GM10248 (cell line): ENCODE measurements at regions of chr12 and their contacts with region 1.

Region 1: DNA sequence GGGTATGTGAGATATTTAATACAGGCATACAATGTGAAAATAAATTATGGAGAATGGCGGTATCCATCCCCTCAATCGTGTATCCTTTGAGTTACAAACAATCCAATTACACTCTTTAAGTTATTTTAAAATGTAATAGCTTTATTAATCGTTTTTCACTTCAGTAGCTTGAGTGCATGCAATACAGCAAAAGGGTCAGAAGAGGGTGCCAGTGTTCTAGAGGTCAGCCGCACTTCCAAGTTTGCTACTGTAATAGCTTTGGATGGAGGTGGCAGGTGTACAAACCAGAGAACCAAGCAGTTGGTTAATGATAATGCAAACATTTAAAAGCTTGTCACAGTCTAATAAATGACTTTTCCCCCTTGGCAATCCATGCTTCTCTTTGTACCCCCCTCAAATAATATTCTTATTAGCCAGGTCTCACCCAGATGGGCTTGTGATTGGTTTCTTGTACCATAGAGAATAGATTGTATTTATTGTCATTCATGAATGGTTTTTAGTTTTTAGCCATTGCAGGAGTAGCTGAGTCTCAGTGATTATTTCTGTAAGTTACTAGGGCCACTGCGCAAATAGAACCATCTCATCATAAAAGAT is 127.0 kb downstream of the ERC1 start:
- DNase-seq: peak; percentile 31
- CTCF ChIP-seq: peak; percentile 84

Region 2: DNA sequence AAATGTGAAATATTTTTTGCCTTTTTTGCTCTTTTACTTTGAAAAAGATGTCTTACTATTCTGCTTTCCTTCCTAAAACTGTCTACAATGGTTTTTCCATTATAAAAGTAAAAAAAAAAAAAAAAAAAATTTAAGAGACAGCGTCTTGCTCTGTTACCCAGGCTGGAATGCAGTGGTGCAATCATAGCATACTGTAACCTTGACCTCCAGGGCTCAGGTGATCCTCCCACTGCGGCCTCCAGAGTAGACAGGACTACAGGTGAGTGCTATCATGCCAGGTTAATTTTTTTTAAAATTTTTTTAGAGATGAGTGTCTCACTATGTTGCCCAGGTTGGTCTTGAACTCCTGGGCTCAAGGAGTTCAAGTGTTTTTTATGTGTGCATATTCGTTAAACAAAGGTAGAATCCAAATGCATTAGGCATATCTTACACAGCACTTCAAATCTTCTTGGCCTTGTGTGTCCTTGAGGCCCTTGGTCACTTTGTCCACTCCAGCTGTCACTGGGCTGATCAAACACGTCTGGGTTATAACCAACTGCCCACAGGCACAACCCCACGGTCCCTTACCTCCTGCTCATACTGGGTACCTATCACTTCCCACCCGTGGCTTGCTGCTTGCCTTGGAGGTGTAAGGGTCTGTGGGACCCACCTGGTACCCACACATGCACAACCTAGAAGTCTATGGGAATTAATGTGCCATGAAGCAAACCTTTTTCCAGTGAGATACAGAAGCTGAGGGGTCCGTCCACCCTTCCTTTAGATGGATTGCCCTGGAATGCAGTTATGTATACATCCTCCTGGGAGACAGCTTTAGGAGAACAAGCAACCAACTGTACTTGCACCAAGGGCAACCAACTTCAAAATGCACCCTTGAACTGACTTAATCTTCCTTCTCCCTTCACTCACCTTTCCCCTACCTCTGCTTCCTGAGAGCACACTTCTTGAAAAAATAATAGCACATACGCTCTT is 181.4 kb before region 1 on chr12:
- CTCF ChIA-PET with region 1: no interaction called
- POLR2A ChIA-PET with region 1: no interaction called
- DNase-seq: no peak
- CTCF ChIP-seq: no peak

Region 3: DNA sequence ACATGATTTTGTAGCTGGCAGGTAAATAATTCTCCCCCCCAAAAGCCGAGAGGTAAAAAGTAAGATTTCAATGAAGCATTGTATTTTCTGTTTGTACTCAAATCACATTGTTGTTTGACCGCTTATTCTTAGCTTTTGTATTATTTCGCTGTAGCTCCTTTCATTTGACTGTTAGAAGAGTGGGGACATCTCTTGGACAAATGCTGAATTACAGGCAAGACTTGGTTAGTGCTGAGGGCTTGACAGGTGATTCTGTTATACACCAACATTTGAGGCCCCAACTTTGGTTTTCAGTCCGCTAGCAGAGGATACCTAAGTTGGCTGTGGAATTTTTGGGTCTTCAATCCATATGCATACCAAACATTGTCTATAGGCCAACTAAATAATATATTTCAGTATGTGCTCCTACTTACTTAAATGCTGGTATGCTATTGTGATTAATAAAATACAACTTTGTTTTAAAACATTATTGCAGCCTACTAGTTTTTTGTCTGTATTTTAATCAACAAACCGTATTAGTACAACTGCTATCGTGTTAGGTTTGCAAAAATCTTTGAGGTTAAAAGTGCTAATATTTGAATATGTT is 24.8 kb before region 1 on chr12:
- CTCF ChIA-PET with region 1: interaction called, 24 read pairs
- POLR2A ChIA-PET with region 1: no interaction called
- DNase-seq: peak; percentile 47
- CTCF ChIP-seq: peak; percentile 77

Region 4: DNA sequence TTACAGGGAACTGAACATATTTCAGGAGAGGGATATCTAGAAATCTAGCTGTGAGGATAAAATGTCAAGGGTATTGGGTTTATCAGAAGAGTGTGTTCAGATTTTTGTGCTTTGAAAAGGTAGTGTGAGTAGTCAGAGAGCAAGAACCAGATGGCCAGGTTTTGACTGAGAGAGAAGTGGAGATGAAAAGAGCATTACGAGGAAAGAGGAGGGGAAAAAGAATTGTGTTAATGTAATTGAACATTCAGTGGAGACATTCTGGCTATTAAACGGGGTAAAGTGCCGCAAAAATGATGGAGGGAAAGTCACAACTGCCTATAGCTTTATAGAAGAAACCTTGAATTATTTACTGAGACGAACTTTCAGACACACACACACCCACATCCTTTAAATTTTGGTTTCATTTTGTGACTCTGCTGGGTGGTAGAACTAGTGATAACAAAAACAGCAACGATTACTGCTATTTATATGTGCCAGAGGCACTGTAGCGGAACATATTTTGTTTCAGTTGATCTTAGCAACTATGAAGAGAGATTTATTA is 86.6 kb after region 1 on chr12:
- CTCF ChIA-PET with region 1: interaction called, 20 read pairs
- POLR2A ChIA-PET with region 1: no interaction called
- DNase-seq: peak; percentile 46
- CTCF ChIP-seq: no peak

Region 5: GRCh38 chr12:1305791-1306500 is 187.9 kb after region 1 on chr12:
- CTCF ChIA-PET with region 1: no interaction called
- POLR2A ChIA-PET with region 1: no interaction called
- DNase-seq: no peak
- CTCF ChIP-seq: no peak

Region 6: DNA sequence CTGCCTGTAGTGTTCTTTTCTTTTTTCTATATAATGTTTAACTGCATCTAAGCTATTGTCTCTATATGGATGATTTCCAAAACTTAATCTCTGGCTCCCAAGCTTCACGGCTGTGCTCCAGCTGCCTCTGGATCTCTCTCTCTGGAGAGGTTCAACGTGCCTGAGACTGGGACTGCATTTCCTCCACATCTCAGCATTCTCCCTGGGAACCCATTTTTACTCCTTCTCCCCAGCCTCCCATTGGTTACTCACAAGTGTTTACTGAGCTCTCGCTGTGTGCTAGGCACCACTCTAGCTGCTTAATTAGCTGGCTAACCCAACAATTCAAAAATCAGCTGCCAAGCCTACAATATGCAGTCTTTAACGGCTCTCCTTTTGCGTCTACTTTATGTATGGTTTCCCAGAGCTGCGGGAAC is 441.6 kb after region 1 on chr12:
- CTCF ChIA-PET with region 1: interaction called, 13 read pairs
- POLR2A ChIA-PET with region 1: no interaction called
- DNase-seq: no peak
- CTCF ChIP-seq: no peak

Region 7: DNA sequence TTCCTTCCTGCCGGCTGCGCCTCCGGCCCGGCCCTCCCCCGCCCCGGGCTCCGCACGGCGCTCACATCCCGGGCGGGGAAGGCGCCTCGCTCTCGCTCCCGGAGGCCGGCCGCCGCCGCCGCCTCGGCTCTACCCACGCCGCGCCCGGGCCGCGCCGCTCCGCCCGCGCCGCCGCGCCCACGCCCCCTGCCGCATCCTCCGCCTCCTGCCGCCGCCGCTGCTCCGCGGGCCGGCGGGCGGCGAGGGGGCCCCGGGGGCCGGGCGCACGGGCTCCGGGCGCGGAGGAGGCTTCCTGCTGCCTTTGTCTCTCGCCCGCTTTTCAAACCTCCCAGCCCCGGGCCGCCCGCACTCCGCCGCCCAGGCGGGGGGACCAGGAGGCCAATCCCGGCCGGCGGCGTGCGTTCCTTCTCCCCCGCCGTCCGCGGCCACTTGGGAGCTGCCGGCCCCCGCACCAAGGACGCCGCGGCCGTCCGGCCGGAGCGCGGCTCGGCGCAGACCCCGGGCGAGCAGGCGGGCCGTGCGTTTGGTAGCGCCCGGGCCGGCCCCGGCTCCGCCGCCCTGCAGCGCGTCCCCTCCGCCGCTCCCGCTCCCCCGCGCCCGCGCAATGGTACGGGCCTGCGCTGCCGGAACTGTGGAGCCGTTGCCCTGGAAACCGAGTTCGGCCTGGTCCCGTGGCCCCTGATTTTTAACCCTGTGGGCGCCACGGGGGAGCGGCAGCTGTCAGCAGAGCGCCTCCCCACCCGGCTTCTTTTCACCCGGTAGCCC is 476.4 kb after region 1 on chr12 and contains the start of gene FBXL14:
- CTCF ChIA-PET with region 1: interaction called, 52 read pairs
- POLR2A ChIA-PET with region 1: no interaction called
- DNase-seq: peak; percentile 85
- CTCF ChIP-seq: peak; percentile 7

Region 8: DNA sequence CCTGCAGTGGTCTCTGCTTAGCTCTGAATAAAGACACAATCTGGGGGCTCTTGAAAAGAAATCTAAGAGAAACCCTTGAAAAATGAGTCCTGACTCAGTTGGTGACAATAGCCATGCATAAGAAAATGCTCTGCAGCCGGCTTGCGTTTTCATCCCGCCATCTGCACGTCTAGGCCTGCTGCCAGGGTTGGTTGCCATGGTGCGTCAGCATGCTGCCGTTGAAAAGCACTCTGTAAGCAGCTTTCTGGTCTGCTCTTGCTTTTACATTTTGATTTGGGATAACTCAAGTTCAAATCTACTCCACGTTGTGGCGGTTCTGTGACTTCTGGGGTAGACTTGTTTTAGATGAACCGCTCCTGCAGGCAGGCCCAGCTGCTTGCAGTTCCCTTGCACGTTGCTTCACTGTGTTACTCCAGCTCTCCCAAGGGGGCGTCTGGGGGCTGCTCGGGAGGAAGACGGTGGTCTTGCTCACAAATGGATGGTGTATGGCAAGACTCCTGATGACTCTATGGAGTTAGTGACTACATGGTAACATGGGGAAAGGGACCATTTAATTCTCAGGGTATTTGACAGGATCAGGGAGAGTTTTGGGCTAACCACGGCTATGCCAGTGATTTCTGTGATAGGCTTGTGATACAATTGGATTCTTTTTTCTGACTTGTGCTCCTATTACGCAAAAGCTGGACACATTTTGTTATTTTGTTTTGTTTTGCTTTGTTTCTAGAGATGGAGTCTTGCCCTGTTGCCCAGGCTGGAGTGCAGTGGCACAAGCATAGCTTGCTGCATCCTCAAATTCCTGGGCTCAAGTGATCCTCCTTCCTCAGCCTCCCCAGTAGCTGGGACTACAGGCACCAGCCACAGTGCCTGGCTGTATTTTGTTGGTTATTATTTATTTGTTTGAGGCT is 526.7 kb after region 1 on chr12:
- CTCF ChIA-PET with region 1: interaction called, 10 read pairs
- POLR2A ChIA-PET with region 1: no interaction called
- DNase-seq: no peak
- CTCF ChIP-seq: no peak